ENCODE measurements at regions of chrX and their contacts with region 1.

Region 1: DNA sequence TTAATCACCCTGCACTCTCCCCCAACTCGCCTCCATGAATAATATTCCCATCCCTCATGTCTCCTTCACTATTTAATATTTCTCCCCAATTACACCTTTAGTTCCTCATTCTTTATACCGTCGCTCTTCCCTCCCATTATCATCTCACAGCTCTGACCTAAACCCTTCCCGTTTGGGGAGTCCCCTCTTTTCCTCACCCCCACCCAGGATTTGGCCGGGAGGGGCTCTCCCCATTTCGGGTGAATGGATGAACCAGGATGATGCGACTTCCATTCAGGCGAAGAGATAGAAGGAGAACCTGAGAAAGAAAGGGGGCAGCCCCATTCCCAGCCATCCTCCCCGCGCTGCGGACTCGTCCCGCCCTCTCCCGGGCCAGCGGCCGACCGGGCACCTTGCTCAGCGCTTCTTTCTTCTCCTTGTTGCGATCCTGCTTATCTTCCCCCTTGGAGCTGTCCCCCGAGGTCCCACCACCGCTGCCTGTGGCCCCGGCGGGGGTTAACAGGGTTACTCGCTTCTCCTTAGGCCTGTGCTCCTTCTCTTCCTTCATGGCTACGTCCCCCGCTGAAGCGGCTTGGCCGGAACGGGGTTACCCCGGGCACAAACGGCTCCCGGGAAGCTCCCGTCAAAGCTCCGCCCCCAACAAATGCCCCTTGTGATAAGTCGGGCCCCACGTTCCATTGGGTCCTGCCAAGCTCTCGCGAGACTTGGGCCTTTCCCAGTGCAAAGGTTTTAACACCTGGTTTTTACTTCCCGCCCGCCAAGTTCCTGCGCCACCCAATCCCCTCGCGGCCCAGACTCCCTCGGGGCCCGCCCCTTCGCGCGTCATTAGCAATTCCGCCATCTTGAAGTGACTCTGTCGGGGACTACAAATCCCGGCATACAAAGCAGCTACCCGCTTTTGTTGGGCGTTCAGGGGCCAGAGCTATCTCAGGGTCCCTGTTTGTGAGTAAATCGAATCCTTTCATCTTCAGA is at the start of gene UPF3B:
- DNase-seq: peak; percentile 95 to 97
- ATAC-seq: peak; percentile 98 to 99 (median 98)
- H3K4me3 ChIP-seq: peak within 1 kb of the TSS; percentile 82
- H3K27ac ChIP-seq: peak within 1 kb of the TSS; percentile 87
- H3K4me1 ChIP-seq: peaks cover 4% of the 10 kb centered on the region
- H3K27me3 ChIP-seq: no peaks in the 10 kb centered on the region
- CTCF ChIP-seq: no peak
- total RNA-seq, gene UPF3B: 4.2 to 10.5 (median 5.3) TPM

Region 2: GRCh38 chrX:119791438-119792231 is 61.0 kb before region 1 on chrX and contains the start of gene RPL39:
- intact Hi-C with region 1: loop called in 1 of 2 experiments (anchors 5 kb)
- DNase-seq: peak; percentile 79 to 89
- ATAC-seq: peak; percentile 94 to 97 (median 94)
- H3K4me3 ChIP-seq: peak within 1 kb of the TSS; percentile 81
- H3K27ac ChIP-seq: peak within 1 kb of the TSS; percentile 88
- H3K4me1 ChIP-seq: peaks cover 4% of the 10 kb centered on the region
- H3K27me3 ChIP-seq: no peaks in the 10 kb centered on the region
- CTCF ChIP-seq: no peak
- total RNA-seq, gene RPL39: 1,072 to 1,581 (median 1,334) TPM

Region 3: GRCh38 chrX:119871599-119872395 is 19.1 kb after region 1 on chrX and contains the starts of genes NDUFA1 and RNF113A:
- intact Hi-C with region 1: loop called in 1 of 2 experiments (anchors 2 kb)
- DNase-seq: peak; percentile 85 to 92
- ATAC-seq: peak; percentile 97 to 98 (median 98)
- H3K4me3 ChIP-seq: peak within 1 kb of the TSS; percentile 61
- H3K27ac ChIP-seq: peak within 1 kb of the TSS; percentile 91
- H3K4me1 ChIP-seq: peaks cover 13% of the 10 kb centered on the region
- H3K27me3 ChIP-seq: no peaks in the 10 kb centered on the region
- CTCF ChIP-seq: no peak
- total RNA-seq, gene NDUFA1: 194 to 237 (median 217) TPM
- total RNA-seq, gene RNF113A: 5.5 to 9.7 (median 8.1) TPM

Region 4: GRCh38 chrX:119970574-119970973 is 117.9 kb after region 1 on chrX:
- intact Hi-C with region 1: no loop called
- DNase-seq: no peak
- ATAC-seq: no peak
- H3K4me3 ChIP-seq: no peak overlapping the region
- H3K27ac ChIP-seq: no peak overlapping the region
- H3K4me1 ChIP-seq: no peaks in the 10 kb centered on the region
- H3K27me3 ChIP-seq: no peaks in the 10 kb centered on the region
- CTCF ChIP-seq: no peak

Measured in psoas muscle (tissue), 8 donors.